Activated CD4-positive, alpha-beta memory T cell treated with anti-CD3 and anti-CD28 coated beads for 36 hours (primary cell): ENCODE measurements at regions of chr12 and their contacts with region 1.

Region 1: GRCh38 chr12:10212201-10213131 is at the start of gene GABARAPL1:
- DNase-seq: peak; percentile 94
- H3K4me3 Mint-ChIP-seq: peak within 1 kb of the TSS; percentile 89
- H3K27ac Mint-ChIP-seq: peak within 1 kb of the TSS; percentile 78
- H3K4me1 Mint-ChIP-seq: peaks cover 21% of the 10 kb centered on the region
- H3K27me3 Mint-ChIP-seq: no peaks in the 10 kb centered on the region
- total RNA-seq, gene GABARAPL1: 7.2 to 8.9 TPM

Region 2: GRCh38 chr12:9615420-9616136 is 596.9 kb before region 1 on chr12:
- CTCF ChIA-PET with region 1: no interaction called
- POLR2A ChIA-PET with region 1: no interaction called
- intact Hi-C with region 1: no loop called
- DNase-seq: no peak
- H3K4me3 Mint-ChIP-seq: peak overlapping the region; percentile 50
- H3K27ac Mint-ChIP-seq: peak overlapping the region; percentile 77
- H3K4me1 Mint-ChIP-seq: peaks cover 73% of the 10 kb centered on the region
- H3K27me3 Mint-ChIP-seq: no peaks in the 10 kb centered on the region

Region 3: GRCh38 chr12:9940375-9940774 is 272.1 kb before region 1 on chr12:
- CTCF ChIA-PET with region 1: no interaction called
- POLR2A ChIA-PET with region 1: no interaction called
- intact Hi-C with region 1: loop called (anchors 10 kb)
- DNase-seq: no peak
- H3K4me3 Mint-ChIP-seq: no peak overlapping the region
- H3K27ac Mint-ChIP-seq: no peak overlapping the region
- H3K4me1 Mint-ChIP-seq: peaks cover 16% of the 10 kb centered on the region
- H3K27me3 Mint-ChIP-seq: peaks cover 4% of the 10 kb centered on the region

Region 4: GRCh38 chr12:10540776-10541205 is 328.3 kb after region 1 on chr12:
- CTCF ChIA-PET with region 1: no interaction called
- POLR2A ChIA-PET with region 1: no interaction called
- intact Hi-C with region 1: loop called (anchors 1 kb)
- DNase-seq: no peak
- H3K4me3 Mint-ChIP-seq: no peak overlapping the region
- H3K27ac Mint-ChIP-seq: no peak overlapping the region
- H3K4me1 Mint-ChIP-seq: peaks cover 9% of the 10 kb centered on the region
- H3K27me3 Mint-ChIP-seq: peaks cover 39% of the 10 kb centered on the region

Region 5: GRCh38 chr12:10721651-10722501 is 509.4 kb after region 1 on chr12:
- CTCF ChIA-PET with region 1: no interaction called
- POLR2A ChIA-PET with region 1: no interaction called
- intact Hi-C with region 1: loop called (anchors 2 kb)
- DNase-seq: peak; percentile 69
- H3K4me3 Mint-ChIP-seq: peak overlapping the region; percentile 93
- H3K27ac Mint-ChIP-seq: peak overlapping the region; percentile 86
- H3K4me1 Mint-ChIP-seq: peaks cover 20% of the 10 kb centered on the region
- H3K27me3 Mint-ChIP-seq: peaks cover 53% of the 10 kb centered on the region